CD8-positive, alpha-beta T cell (primary cell): ENCODE measurements at regions of chr12 and their contacts with region 1.

Region 1: DNA sequence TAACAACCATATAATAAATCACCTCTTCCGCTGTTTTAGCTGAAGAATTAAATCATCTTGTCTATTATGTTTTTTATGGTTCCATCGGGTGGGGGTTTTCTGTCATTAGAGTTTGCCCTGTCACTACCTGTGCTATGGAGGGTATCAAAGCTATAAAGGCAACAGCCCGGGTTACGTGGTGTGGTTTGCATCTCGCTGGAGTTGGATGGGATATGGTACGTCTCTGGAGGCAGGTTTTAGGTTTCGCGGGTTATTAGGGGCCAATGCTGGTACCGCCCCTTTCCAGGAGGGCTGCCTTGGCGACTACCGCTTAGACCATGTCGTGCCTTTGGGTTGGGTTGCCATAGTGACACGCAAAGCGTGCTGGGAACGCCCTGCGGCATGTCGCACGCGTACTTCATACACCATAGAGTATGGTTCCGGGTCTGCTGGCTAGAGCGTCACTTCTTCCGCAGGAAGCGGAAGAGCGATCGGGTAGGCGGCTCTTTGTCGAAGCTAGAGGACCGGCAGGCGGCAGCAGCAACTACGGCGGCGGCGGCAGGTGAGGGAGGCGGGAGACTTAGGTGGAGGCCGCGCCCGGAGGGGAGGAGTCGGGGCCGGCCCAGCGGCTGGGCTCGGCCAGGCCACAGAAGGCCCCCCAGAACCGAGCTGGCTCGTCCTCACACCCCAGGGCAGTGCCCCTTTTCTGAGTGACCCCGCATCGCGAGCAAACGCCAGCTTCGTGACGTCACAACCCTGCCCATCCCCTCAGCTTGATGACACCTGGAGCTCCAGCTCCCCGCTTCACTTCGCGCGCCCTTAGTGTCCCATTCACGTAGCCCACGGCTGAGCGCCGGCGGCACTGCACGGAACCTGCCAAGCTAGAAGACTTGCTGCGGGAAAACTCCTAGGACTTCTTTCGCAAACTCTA is at the start of gene ZC3H10:
- DNase-seq: peak; percentile 91 to 100 (median 96)
- ATAC-seq: peak; percentile 70
- H3K4me3 ChIP-seq: peak within 1 kb of the TSS; percentile 77 to 86
- H3K4me3 Mint-ChIP-seq: peak within 1 kb of the TSS; percentile 98
- H3K27ac ChIP-seq: peak within 1 kb of the TSS; percentile 87 to 95
- H3K27ac Mint-ChIP-seq: peak within 1 kb of the TSS; percentile 99
- H3K4me1 ChIP-seq: peaks cover 30% of the 10 kb centered on the region
- H3K4me1 Mint-ChIP-seq: peaks cover 38% of the 10 kb centered on the region
- H3K27me3 ChIP-seq: no peaks in the 10 kb centered on the region
- H3K27me3 Mint-ChIP-seq: no peaks in the 10 kb centered on the region
- CTCF ChIP-seq: peak; percentile 33
- total RNA-seq, gene ZC3H10: 9.0 TPM

Region 2: DNA sequence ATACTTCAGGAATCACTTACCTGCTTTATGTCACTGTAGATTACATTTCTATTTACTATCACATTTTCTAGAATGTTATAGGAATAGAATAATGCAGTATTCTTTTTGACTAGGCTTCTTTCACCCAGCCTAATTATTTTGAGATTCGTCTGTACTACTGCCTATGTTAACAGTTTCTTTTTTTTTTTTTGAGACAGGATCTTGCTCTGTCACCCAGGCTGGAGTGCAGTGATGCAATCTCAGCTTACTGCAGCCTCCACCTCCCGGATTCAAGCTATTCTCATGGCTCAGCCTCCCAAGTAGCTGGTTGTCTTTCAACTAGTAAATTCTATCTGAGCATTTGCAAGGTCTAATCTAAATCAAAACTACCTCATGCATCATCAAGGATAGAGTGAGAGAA is 828.0 kb before region 1 on chr12:
- CTCF ChIA-PET with region 1: no interaction called
- POLR2A ChIA-PET with region 1: no interaction called
- intact Hi-C with region 1: no loop called
- DNase-seq: no peak
- ATAC-seq: no peak
- H3K4me3 ChIP-seq: no peak overlapping the region
- H3K4me3 Mint-ChIP-seq: no peak overlapping the region
- H3K27ac ChIP-seq: no peak overlapping the region
- H3K27ac Mint-ChIP-seq: no peak overlapping the region
- H3K4me1 ChIP-seq: no peaks in the 10 kb centered on the region
- H3K4me1 Mint-ChIP-seq: no peaks in the 10 kb centered on the region
- H3K27me3 ChIP-seq: peaks cover 0 to 3% of the 10 kb centered on the region in 2 experiments
- H3K27me3 Mint-ChIP-seq: peaks cover 23% of the 10 kb centered on the region
- CTCF ChIP-seq: no peak

Region 3: DNA sequence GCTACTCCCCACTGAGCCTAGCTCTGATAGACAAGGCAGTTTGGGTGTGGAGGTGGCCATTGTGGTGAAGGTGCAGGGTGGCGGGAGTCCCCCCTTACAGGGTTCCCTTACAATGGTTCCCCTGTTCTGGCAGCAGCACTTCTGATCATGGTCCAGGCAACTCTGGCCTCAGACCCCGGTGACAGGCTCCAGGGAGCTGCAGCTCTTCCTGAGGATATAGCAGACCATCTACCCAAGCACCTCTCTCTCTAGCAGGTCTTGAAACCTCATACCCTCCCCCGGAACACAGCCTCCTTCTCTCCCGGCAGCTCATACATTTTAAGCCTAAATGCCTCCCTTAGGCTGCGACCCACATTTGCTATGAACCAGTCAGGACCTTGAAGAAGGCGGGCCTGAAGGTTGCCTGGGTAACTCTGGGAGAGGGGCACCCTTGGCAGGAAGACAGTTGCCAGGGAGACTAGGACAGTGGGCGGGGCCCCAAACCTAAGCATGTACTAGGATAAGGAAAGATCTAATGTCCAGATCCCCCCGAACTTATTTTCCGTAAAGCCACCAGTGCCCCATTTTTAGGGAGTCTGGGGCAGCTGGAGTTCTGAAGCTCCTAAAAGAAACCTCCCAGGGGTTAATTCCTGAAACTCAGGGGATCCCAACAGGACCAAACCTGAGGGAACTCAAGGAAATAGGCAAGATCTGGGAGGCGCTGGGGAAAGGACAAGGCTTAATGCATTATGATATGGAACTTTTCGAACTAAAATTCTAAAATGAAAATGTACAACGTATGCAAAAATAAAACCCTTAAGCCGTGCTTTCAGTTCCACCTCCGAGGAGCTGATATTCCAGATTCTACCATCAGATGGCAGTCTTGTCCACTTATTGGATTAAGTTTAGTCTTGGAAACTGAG is 379.7 kb before region 1 on chr12:
- CTCF ChIA-PET with region 1: interaction called, 4 read pairs
- POLR2A ChIA-PET with region 1: interaction called, 4 read pairs
- intact Hi-C with region 1: loop called (anchors 5 to 10 kb)
- DNase-seq: peak; percentile 51 to 89 (median 81)
- ATAC-seq: peak; percentile 75
- H3K4me3 ChIP-seq: peak overlapping the region; percentile 73 to 80
- H3K4me3 Mint-ChIP-seq: peak overlapping the region; percentile 90
- H3K27ac ChIP-seq: peak overlapping the region; percentile 73 to 87
- H3K27ac Mint-ChIP-seq: peak overlapping the region; percentile 93
- H3K4me1 ChIP-seq: peaks cover 22% of the 10 kb centered on the region
- H3K4me1 Mint-ChIP-seq: peaks cover 24% of the 10 kb centered on the region
- H3K27me3 ChIP-seq: no peaks in the 10 kb centered on the region
- H3K27me3 Mint-ChIP-seq: no peaks in the 10 kb centered on the region
- CTCF ChIP-seq: peak; percentile 90

Region 4: GRCh38 chr12:55996715-55997534 is 121.1 kb before region 1 on chr12 and contains the start of gene SUOX:
- CTCF ChIA-PET with region 1: interaction called, 11 read pairs
- POLR2A ChIA-PET with region 1: no interaction called
- intact Hi-C with region 1: loop called in 1 of 2 experiments (anchors 2 kb)
- DNase-seq: peak in 6 of 9 experiments; percentile 7 to 52 (median 26)
- ATAC-seq: no peak
- H3K4me3 ChIP-seq: peak within 1 kb of the TSS; percentile 14 to 34
- H3K4me3 Mint-ChIP-seq: peak within 1 kb of the TSS; percentile 66
- H3K27ac ChIP-seq: no peak within 1 kb of the TSS
- H3K27ac Mint-ChIP-seq: no peak within 1 kb of the TSS
- H3K4me1 ChIP-seq: peaks cover 14% of the 10 kb centered on the region
- H3K4me1 Mint-ChIP-seq: peaks cover 23% of the 10 kb centered on the region
- H3K27me3 ChIP-seq: peaks cover 0 to 12% of the 10 kb centered on the region in 2 experiments
- H3K27me3 Mint-ChIP-seq: peaks cover 6% of the 10 kb centered on the region
- CTCF ChIP-seq: no peak
- total RNA-seq, gene SUOX: 0.72 to 1.2 TPM

Region 5: DNA sequence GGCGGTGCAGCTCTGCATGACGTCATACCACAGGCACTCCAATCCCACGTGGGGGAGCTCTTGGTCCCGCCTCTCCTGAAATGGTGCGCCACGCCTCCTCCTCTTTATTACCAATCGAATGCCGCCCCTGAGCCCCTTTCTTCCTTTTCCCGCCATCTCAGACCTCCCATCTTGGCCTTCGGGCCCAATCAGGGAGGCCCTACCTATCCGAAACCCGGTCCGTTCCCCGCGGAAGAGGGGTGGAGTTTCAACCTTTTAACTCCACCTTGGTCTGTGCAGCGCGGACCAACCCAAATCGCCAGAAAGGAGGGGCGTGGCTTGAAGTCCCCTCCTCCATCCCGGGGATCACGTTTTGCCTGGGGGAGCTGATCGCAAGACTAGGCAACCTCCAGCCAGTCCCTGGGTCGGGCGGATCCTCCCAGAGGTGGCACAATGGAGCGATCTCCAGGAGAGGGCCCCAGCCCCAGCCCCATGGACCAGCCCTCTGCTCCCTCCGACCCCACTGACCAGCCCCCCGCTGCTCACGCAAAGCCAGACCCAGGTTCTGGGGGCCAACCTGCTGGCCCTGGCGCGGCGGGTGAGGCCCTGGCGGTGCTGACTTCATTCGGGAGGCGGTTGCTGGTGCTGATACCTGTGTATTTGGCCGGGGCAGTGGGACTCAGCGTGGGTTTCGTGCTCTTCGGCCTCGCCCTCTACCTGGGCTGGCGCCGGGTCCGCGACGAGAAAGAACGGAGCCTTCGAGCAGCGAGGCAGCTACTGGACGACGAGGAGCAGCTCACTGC is 10.0 kb after region 1 on chr12 and contains the start of gene ESYT1:
- CTCF ChIA-PET with region 1: interaction called, 51 read pairs
- POLR2A ChIA-PET with region 1: interaction called, 73 read pairs
- intact Hi-C with region 1: loop called (anchors 1 kb)
- DNase-seq: peak; percentile 94 to 100 (median 96)
- ATAC-seq: peak; percentile 87
- H3K4me3 ChIP-seq: peak within 1 kb of the TSS; percentile 71 to 97
- H3K4me3 Mint-ChIP-seq: peak within 1 kb of the TSS; percentile 97
- H3K27ac ChIP-seq: peak within 1 kb of the TSS; percentile 79 to 86
- H3K27ac Mint-ChIP-seq: peak within 1 kb of the TSS; percentile 94
- H3K4me1 ChIP-seq: peaks cover 60% of the 10 kb centered on the region
- H3K4me1 Mint-ChIP-seq: peaks cover 64% of the 10 kb centered on the region
- H3K27me3 ChIP-seq: no peaks in the 10 kb centered on the region
- H3K27me3 Mint-ChIP-seq: no peaks in the 10 kb centered on the region
- CTCF ChIP-seq: no peak
- total RNA-seq, gene ESYT1: 82.4 to 83.0 TPM

Region 6: GRCh38 chr12:56189176-56189917 is 71.3 kb after region 1 on chr12 and contains the start of gene SMARCC2:
- CTCF ChIA-PET with region 1: interaction called, 91 read pairs
- POLR2A ChIA-PET with region 1: interaction called, 76 read pairs
- intact Hi-C with region 1: loop called (anchors 1 kb)
- DNase-seq: peak; percentile 69 to 94 (median 84)
- ATAC-seq: peak; percentile 82
- H3K4me3 ChIP-seq: peak within 1 kb of the TSS; percentile 65 to 96
- H3K4me3 Mint-ChIP-seq: peak within 1 kb of the TSS; percentile 96
- H3K27ac ChIP-seq: peak within 1 kb of the TSS; percentile 66 to 82
- H3K27ac Mint-ChIP-seq: peak within 1 kb of the TSS; percentile 94
- H3K4me1 ChIP-seq: peaks cover 19% of the 10 kb centered on the region
- H3K4me1 Mint-ChIP-seq: peaks cover 43% of the 10 kb centered on the region
- H3K27me3 ChIP-seq: no peaks in the 10 kb centered on the region
- H3K27me3 Mint-ChIP-seq: no peaks in the 10 kb centered on the region
- CTCF ChIP-seq: peak; percentile 61
- total RNA-seq, gene SMARCC2: 109 to 113 TPM

Region 7: GRCh38 chr12:56299853-56300643 is 182.0 kb after region 1 on chr12 and contains the start of gene CS:
- CTCF ChIA-PET with region 1: interaction called, 4 read pairs
- POLR2A ChIA-PET with region 1: no interaction called
- intact Hi-C with region 1: loop called in 1 of 2 experiments (anchors 1 kb)
- DNase-seq: peak; percentile 97 to 99 (median 99)
- ATAC-seq: peak; percentile 95
- H3K4me3 ChIP-seq: peak within 1 kb of the TSS; percentile 67 to 80
- H3K4me3 Mint-ChIP-seq: peak within 1 kb of the TSS; percentile 95
- H3K27ac ChIP-seq: peak within 1 kb of the TSS; percentile 77 to 95
- H3K27ac Mint-ChIP-seq: peak within 1 kb of the TSS; percentile 94
- H3K4me1 ChIP-seq: peaks cover 45% of the 10 kb centered on the region
- H3K4me1 Mint-ChIP-seq: peaks cover 55% of the 10 kb centered on the region
- H3K27me3 ChIP-seq: no peaks in the 10 kb centered on the region
- H3K27me3 Mint-ChIP-seq: no peaks in the 10 kb centered on the region
- CTCF ChIP-seq: no peak
- total RNA-seq, gene CS: 154 to 159 TPM

Region 8: DNA sequence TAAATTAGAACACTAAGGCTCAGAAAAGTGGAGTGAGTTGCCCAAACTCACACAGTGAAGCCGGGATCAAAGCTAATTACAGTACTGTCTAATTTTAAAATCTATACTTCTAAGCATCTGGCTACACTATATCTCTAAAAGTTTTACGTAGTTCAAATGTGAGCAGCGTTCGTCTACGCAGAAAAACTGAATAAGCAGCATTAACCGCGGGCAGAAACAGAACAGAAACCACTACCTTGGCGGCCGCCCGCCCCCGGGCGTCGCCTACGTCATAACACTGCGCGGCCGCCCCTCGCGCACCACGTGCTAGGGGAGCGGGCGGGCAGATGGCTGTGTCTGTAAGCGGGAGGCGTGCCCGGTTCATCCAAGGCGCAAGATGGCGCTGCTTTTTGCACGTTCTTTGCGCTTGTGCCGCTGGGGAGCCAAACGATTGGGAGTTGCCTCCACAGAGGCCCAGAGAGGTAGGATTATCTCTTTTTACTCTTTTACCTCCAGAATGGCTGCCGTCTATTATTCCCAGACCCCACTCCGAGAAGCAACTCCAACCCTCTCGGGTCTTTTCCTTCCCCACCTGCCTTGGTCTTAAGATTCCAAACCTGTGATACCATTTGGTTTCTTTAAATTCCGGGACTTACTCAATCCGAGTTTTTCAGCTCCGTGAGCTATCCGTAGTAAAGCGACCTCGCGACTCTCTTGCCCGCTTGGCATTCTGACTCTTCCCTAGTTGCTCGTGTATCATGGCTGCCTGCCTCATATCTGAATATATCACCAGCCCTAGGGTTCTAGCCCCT is 350.4 kb after region 1 on chr12 and contains the start of gene SPRYD4:
- CTCF ChIA-PET with region 1: interaction called, 14 read pairs
- POLR2A ChIA-PET with region 1: interaction called, 4 read pairs
- intact Hi-C with region 1: loop called (anchors 1 kb)
- DNase-seq: peak; percentile 89 to 97 (median 93)
- ATAC-seq: peak; percentile 90
- H3K4me3 ChIP-seq: peak within 1 kb of the TSS; percentile 72 to 99
- H3K4me3 Mint-ChIP-seq: peak within 1 kb of the TSS; percentile 95
- H3K27ac ChIP-seq: peak within 1 kb of the TSS; percentile 93 to 96
- H3K27ac Mint-ChIP-seq: peak within 1 kb of the TSS; percentile 98
- H3K4me1 ChIP-seq: peaks cover 10% of the 10 kb centered on the region
- H3K4me1 Mint-ChIP-seq: peaks cover 35% of the 10 kb centered on the region
- H3K27me3 ChIP-seq: no peaks in the 10 kb centered on the region
- H3K27me3 Mint-ChIP-seq: no peaks in the 10 kb centered on the region
- CTCF ChIP-seq: no peak
- total RNA-seq, gene SPRYD4: 6.8 to 6.9 TPM

Region 9: GRCh38 chr12:56957229-56957939 is 839.4 kb after region 1 on chr12 and contains the start of gene RDH16:
- CTCF ChIA-PET with region 1: no interaction called
- POLR2A ChIA-PET with region 1: no interaction called
- intact Hi-C with region 1: no loop called
- DNase-seq: no peak
- ATAC-seq: no peak
- H3K4me3 ChIP-seq: no peak within 1 kb of the TSS
- H3K4me3 Mint-ChIP-seq: no peak within 1 kb of the TSS
- H3K27ac ChIP-seq: no peak within 1 kb of the TSS
- H3K27ac Mint-ChIP-seq: no peak within 1 kb of the TSS
- H3K4me1 ChIP-seq: no peaks in the 10 kb centered on the region
- H3K4me1 Mint-ChIP-seq: no peaks in the 10 kb centered on the region
- H3K27me3 ChIP-seq: no peaks in the 10 kb centered on the region
- H3K27me3 Mint-ChIP-seq: no peaks in the 10 kb centered on the region
- CTCF ChIP-seq: no peak
- total RNA-seq, gene RDH16: 0.33 to 0.60 TPM